Endothelial cell of umbilical vein (primary cell): ENCODE measurements at regions of chr2 and their contacts with region 1.

Region 1: DNA sequence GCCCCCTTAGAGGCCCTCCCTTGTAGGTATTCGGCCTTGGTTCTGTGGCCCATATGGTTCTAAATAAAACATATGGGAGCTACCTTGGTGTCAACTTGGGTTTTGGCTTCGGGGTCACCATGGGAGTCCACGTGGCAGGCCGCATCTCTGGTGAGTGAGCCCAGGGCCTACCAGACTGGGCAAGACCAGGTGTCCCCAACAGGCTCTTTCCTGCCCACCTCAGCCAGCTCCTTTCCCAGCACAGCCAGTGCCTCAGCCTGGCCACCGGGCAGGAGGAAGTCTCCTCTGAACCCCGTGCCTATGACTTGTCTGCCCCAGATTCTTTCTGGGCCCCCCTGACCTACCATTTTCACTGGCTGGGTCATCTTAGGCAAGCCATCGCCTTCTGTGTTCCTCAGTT is 268.8 kb upstream of the TEKT4 start:
- DNase-seq: no peak
- H3K4me3 ChIP-seq: no peak overlapping the region
- H3K27ac ChIP-seq: no peak overlapping the region
- H3K4me1 ChIP-seq: no peaks in the 10 kb centered on the region
- H3K27me3 ChIP-seq: no peaks in the 10 kb centered on the region
- CTCF ChIP-seq: no peak
- POLR2A ChIP-seq: no peak

Region 2: GRCh38 chr2:94725543-94725942 is 123.1 kb after region 1 on chr2:
- CTCF ChIA-PET with region 1: no interaction called
- POLR2A ChIA-PET with region 1: no interaction called
- dilution Hi-C with region 1: no loop called
- intact Hi-C with region 1: loop called (anchors 10 kb)
- DNase-seq: no peak
- H3K4me3 ChIP-seq: no peak overlapping the region
- H3K27ac ChIP-seq: no peak overlapping the region
- H3K4me1 ChIP-seq: no peaks in the 10 kb centered on the region
- H3K27me3 ChIP-seq: no peaks in the 10 kb centered on the region
- CTCF ChIP-seq: no peak
- POLR2A ChIP-seq: no peak

Region 3: DNA sequence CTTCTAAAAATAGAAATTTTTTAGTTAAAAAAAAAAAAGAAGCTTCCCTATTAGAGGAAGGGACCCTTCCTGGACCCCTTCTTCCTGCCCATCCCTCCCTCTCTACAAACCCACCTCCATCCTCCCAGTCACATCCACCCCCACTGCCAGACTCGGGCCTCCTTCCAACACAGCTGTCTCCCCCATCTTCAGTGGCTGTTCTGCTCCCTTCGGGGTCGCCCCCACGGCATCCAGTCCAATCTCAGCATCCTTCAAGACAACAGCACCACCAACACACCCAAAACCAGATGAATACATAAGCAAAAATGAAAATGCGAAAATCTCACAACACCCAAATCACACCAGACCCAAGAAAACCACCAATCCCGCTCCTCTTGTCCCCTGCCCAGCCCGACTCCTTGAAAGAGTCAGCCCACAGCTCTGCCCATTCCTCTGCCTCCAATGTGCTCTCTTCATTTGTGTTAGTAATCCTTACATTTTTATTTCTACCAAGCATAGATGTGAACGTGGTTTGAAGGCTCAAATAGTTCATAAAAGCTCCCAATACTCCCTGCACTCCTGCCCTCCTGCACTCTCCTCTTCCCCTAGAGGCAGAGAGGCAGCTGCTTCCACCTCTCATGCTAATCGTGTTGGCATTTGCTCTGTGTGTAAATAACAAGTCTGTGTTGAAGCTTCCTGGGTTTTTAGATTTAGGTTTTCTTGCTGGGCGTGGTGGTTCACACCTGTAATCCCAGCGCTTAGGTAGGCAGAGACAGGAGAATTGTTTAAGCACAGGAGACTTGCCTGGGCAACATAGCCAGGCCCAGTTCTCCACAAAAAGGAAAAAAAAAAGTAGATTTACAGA is 460.0 kb after region 1 on chr2:
- CTCF ChIA-PET with region 1: no interaction called
- POLR2A ChIA-PET with region 1: no interaction called
- dilution Hi-C with region 1: no loop called
- intact Hi-C with region 1: no loop called
- DNase-seq: no peak
- H3K4me3 ChIP-seq: no peak overlapping the region
- H3K27ac ChIP-seq: no peak overlapping the region
- H3K4me1 ChIP-seq: no peaks in the 10 kb centered on the region
- H3K27me3 ChIP-seq: no peaks in the 10 kb centered on the region
- CTCF ChIP-seq: no peak
- POLR2A ChIP-seq: no peak

Region 4: GRCh38 chr2:95149397-95149984 is 547.0 kb after region 1 on chr2:
- CTCF ChIA-PET with region 1: no interaction called
- POLR2A ChIA-PET with region 1: no interaction called
- dilution Hi-C with region 1: no loop called
- intact Hi-C with region 1: no loop called
- DNase-seq: no peak
- H3K4me3 ChIP-seq: no peak overlapping the region
- H3K27ac ChIP-seq: no peak overlapping the region
- H3K4me1 ChIP-seq: no peaks in the 10 kb centered on the region
- H3K27me3 ChIP-seq: no peaks in the 10 kb centered on the region
- CTCF ChIP-seq: no peak
- POLR2A ChIP-seq: no peak